ENCODE measurements at regions of chr20 and their contacts with region 1.

Region 1: DNA sequence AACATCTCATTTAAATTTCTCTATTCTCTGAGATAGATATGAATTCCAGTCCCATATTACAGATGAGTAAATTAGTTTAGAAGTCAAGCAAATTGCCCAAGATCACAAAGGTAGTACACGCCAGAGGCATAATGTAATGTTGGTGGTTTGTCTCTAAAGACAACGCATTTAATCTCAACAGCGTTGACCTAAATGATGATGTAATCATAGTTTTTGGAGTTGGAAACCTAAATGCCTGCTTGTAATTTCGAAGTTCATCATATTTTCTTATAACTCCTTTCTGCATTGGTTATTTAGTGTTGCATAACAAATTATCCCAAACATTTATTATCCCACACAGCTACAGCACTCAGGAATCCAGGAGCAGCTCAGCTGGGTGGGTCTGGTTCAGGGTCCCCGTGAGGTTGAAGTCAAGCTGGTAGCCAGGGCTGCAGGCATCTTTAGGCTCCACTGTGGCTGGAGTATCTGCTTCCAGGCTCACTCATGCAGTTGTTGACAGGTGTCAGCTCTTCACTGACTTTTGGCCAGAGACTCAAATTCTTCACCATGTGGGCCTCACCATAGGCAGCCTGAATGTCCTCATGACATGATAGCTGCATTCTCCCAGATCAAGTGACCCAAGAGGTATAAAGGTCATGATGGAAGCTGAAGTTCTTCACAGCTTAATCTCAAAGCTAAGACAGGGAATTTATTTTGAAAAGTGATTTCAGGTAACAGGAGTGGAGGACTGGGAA is 122.0 kb upstream of the SPTLC3 start:
- DNase-seq: peak; percentile 27
- ATAC-seq: peak; percentile 84 to 90

Region 2: DNA sequence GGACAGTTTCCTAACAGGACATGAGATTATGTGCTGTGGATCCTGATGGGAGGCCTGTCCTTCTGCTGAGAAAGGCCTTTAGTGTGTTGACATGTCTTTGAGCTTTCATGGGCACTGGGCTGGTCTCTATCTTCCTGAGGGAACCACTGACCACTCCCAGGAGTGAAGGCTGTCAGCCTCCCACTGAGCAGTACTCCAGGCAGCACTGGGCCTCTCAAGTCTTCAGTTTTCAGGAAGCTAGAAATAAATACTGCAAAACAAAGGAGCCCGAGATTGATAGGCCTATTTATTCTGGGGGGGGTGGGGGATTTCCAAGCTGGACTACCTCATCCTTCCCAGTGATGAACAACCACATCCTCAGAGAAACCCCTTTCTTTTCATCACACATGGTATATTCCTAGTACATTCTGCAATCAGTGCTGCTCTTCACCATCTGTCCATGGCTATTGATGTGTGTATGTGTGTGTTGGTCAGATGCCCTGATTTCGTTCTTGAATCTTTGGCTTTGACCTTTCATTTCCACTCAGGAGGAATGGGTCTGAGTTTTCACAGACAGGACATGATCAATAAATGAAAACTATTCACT is 58.9 kb before region 1 on chr20:
- intact Hi-C with region 1: loop called in 1 of 2 experiments (anchors 5 kb)
- DNase-seq: no peak
- ATAC-seq: peak; percentile 25 to 52

Region 3: GRCh38 chr20:12847872-12848271 is 38.9 kb before region 1 on chr20:
- intact Hi-C with region 1: no loop called
- DNase-seq: no peak
- ATAC-seq: no peak

Region 4: GRCh38 chr20:12925214-12925755 is 38.5 kb after region 1 on chr20:
- intact Hi-C with region 1: no loop called
- DNase-seq: peak; percentile 39
- ATAC-seq: peak; percentile 91